Lower leg skin (tissue), 4 donors: ENCODE measurements at regions of chr14 and their contacts with region 1.

Region 1: GRCh38 chr14:55094321-55095157 is 34.5 kb upstream of the LGALS3 start:
- DNase-seq: no peak
- H3K4me3 ChIP-seq: no peak overlapping the region
- CTCF ChIP-seq: no peak
- POLR2A ChIP-seq: no peak

Region 2: DNA sequence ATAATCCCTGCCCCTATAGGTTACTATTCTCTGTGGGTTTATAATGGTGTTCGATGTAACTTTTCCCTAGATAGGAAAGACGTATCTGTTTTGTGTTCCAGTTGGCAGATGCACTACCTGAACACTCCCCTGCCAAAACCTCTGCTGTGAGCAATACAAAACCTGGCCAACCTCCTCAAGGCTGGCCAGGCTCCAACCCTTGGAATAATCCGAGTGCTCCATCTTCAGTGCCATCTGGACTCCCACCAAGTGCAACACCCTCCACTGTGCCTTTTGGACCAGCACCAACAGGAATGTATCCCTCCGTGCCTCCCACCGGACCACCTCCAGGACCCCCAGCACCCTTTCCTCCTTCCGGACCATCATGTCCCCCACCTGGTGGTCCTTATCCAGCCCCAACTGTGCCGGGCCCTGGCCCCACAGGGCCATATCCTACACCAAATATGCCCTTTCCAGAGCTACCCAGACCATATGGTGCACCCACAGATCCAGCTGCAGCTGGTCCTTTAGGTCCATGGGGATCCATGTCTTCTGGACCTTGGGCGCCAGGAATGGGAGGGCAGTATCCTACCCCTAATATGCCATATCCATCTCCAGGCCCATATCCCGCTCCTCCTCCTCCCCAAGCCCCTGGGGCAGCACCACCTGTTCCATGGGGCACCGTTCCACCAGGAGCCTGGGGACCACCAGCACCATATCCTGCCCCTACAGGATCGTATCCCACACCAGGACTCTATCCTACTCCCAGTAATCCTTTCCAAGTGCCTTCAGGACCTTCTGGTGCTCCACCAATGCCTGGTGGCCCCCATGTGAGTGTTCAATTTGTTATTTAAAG is 31.8 kb before region 1 on chr14:
- intact Hi-C with region 1: no loop called
- DNase-seq: no peak
- H3K4me3 ChIP-seq: no peak overlapping the region
- CTCF ChIP-seq: no peak
- POLR2A ChIP-seq: no peak

Region 3: GRCh38 chr14:55160989-55161388 is 66.5 kb after region 1 on chr14:
- intact Hi-C with region 1: loop called (anchors 5 kb)
- DNase-seq: no peak
- H3K4me3 ChIP-seq: no peak overlapping the region
- CTCF ChIP-seq: no peak
- POLR2A ChIP-seq: no peak